ENCODE measurements at regions of chr3 and their contacts with region 1.

Region 1: GRCh38 chr3:136938334-136938733 is 19.4 kb upstream of the IL20RB start:
- DNase-seq: no peak
- ATAC-seq: no peak
- H3K4me3 ChIP-seq: no peak overlapping the region
- H3K4me3 Mint-ChIP-seq: no peak overlapping the region
- H3K27ac ChIP-seq: no peak overlapping the region
- H3K27ac Mint-ChIP-seq: no peak overlapping the region
- H3K4me1 ChIP-seq: peaks cover under 1 to 20% of the 10 kb centered on the region in 2 donors
- H3K4me1 Mint-ChIP-seq: peaks cover 49% of the 10 kb centered on the region
- H3K27me3 ChIP-seq: no peaks in the 10 kb centered on the region
- H3K27me3 Mint-ChIP-seq: no peaks in the 10 kb centered on the region
- CTCF ChIP-seq: no peak

Region 2: GRCh38 chr3:136831461-136831860 is 106.9 kb before region 1 on chr3:
- CTCF ChIA-PET with region 1: no interaction called
- POLR2A ChIA-PET with region 1: no interaction called
- intact Hi-C with region 1: no loop called
- DNase-seq: no peak
- ATAC-seq: no peak
- H3K4me3 ChIP-seq: no peak overlapping the region
- H3K4me3 Mint-ChIP-seq: no peak overlapping the region
- H3K27ac ChIP-seq: no peak overlapping the region
- H3K27ac Mint-ChIP-seq: no peak overlapping the region
- H3K4me1 ChIP-seq: no peaks in the 10 kb centered on the region
- H3K4me1 Mint-ChIP-seq: no peaks in the 10 kb centered on the region
- H3K27me3 ChIP-seq: peaks cover 0 to 12% (median 6%) of the 10 kb centered on the region in 4 experiments
- H3K27me3 Mint-ChIP-seq: peaks cover 11% of the 10 kb centered on the region
- CTCF ChIP-seq: no peak

Region 3: GRCh38 chr3:136899622-136900158 is 38.6 kb before region 1 on chr3:
- CTCF ChIA-PET with region 1: no interaction called
- POLR2A ChIA-PET with region 1: no interaction called
- intact Hi-C with region 1: loop called (anchors 5 kb)
- DNase-seq: no peak
- ATAC-seq: no peak
- H3K4me3 ChIP-seq: no peak overlapping the region
- H3K4me3 Mint-ChIP-seq: no peak overlapping the region
- H3K27ac ChIP-seq: peak overlapping the region in 1 of 2 donors; percentile 22
- H3K27ac Mint-ChIP-seq: peak overlapping the region; percentile 44
- H3K4me1 ChIP-seq: peaks cover 16 to 52% of the 10 kb centered on the region in 2 donors
- H3K4me1 Mint-ChIP-seq: peaks cover 62% of the 10 kb centered on the region
- H3K27me3 ChIP-seq: no peaks in the 10 kb centered on the region
- H3K27me3 Mint-ChIP-seq: no peaks in the 10 kb centered on the region
- CTCF ChIP-seq: no peak

Region 4: DNA sequence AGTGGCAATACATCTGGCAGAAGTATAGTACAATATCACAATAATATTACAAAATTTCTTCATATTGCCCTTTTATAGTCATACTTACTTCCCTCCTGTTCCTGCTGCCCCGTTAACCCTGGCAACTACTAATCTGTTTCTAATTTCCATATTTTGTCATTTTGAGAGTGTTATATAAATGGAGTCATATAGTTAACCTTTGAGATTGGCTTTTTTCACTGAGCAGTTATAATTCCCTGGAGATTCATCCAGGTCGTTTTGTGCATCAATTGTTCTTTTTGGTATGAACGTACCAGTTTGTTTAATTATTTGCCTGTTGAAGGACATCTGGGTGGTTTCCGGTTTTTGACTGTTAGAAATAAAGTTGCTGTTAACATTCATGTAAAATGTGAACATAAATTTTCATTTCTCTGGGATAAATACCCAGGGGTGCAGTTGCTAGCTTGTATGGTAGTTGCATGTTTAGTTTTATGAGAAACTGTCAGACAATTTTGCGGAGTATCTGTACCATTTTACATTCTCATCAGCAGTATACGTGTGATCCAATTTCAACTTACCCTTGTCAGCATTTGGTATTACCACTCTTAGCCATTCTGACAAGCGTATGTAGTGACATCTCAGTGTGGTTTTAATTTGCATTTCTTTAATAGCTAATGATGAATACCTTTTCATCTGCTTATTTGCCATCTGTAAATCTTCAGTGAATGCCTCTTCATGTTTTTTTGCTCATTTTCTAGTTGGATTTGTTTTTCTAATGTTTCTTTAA is 12.7 kb before region 1 on chr3:
- CTCF ChIA-PET with region 1: no interaction called
- POLR2A ChIA-PET with region 1: no interaction called
- intact Hi-C with region 1: no loop called
- DNase-seq: no peak
- ATAC-seq: no peak
- H3K4me3 ChIP-seq: no peak overlapping the region
- H3K4me3 Mint-ChIP-seq: peak overlapping the region; percentile 62
- H3K27ac ChIP-seq: no peak overlapping the region
- H3K27ac Mint-ChIP-seq: no peak overlapping the region
- H3K4me1 ChIP-seq: peaks cover 6 to 14% of the 10 kb centered on the region in 2 donors
- H3K4me1 Mint-ChIP-seq: peaks cover 49% of the 10 kb centered on the region
- H3K27me3 ChIP-seq: no peaks in the 10 kb centered on the region
- H3K27me3 Mint-ChIP-seq: no peaks in the 10 kb centered on the region
- CTCF ChIP-seq: no peak

Region 5: GRCh38 chr3:136949708-136950107 is 11.4 kb after region 1 on chr3:
- CTCF ChIA-PET with region 1: no interaction called
- POLR2A ChIA-PET with region 1: no interaction called
- intact Hi-C with region 1: no loop called
- DNase-seq: no peak
- ATAC-seq: no peak
- H3K4me3 ChIP-seq: no peak overlapping the region
- H3K4me3 Mint-ChIP-seq: no peak overlapping the region
- H3K27ac ChIP-seq: no peak overlapping the region
- H3K27ac Mint-ChIP-seq: no peak overlapping the region
- H3K4me1 ChIP-seq: peaks cover 17 to 29% of the 10 kb centered on the region in 2 donors
- H3K4me1 Mint-ChIP-seq: peaks cover 40% of the 10 kb centered on the region
- H3K27me3 ChIP-seq: no peaks in the 10 kb centered on the region
- H3K27me3 Mint-ChIP-seq: no peaks in the 10 kb centered on the region
- CTCF ChIP-seq: no peak